ENCODE measurements at regions of chr6 and their contacts with region 1.

Region 1: DNA sequence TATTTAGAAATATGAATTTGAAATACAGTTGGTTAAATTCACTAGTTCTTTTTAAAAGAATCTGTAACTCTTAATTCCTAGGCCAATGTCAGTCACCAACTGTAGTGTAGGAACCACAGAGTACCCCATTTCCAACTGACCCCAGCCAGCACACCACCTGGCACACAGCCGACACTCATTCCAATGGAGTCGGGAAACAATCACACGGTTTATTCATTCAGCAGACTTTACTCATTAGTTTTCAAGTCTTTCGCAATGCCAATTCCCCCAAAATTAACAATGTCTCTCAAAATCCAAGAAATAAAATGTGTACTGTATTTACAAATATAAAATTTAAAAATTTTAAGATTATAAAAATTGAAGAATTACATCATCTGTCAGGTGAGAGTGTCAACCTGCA is 13.5 kb downstream of the ARG1 start:
- DNase-seq: no peak
- ATAC-seq: no peak
- H3K4me3 ChIP-seq: no peak overlapping the region
- H3K27ac ChIP-seq: no peak overlapping the region
- H3K4me1 ChIP-seq: no peaks in the 10 kb centered on the region
- H3K27me3 ChIP-seq: no peaks in the 10 kb centered on the region
- CTCF ChIP-seq: no peak

Region 2: GRCh38 chr6:131627724-131628682 is 41.5 kb after region 1 on chr6 and contains the start of gene MED23:
- intact Hi-C with region 1: loop called (anchors 5 kb)
- DNase-seq: peak; percentile 94 to 96
- ATAC-seq: peak; percentile 98 to 100 (median 99)
- H3K4me3 ChIP-seq: peak within 1 kb of the TSS; percentile 78
- H3K27ac ChIP-seq: peak within 1 kb of the TSS; percentile 78
- H3K4me1 ChIP-seq: peaks cover 6% of the 10 kb centered on the region
- H3K27me3 ChIP-seq: no peaks in the 10 kb centered on the region
- CTCF ChIP-seq: peak; percentile 92
- total RNA-seq, gene MED23: 7.9 to 11.2 (median 9.1) TPM